ENCODE measurements at regions of chr7 and their contacts with region 1.

Region 1: GRCh38 chr7:33487998-33488682 is 358.8 kb downstream of the BBS9 start:
- DNase-seq: no peak
- ATAC-seq: peak; percentile 92
- H3K4me3 ChIP-seq: no peak overlapping the region
- H3K27ac ChIP-seq: no peak overlapping the region
- H3K4me1 ChIP-seq: peaks cover 6% of the 10 kb centered on the region; the same call in 1 of the 2 replicates
- H3K27me3 ChIP-seq: no peaks in the 10 kb centered on the region
- CTCF ChIP-seq: no peak
- EP300 ChIP-seq: peak in 1 of 2 experiments; percentile 55; a peak in 1 of 4 replicates
- POLR2A ChIP-seq: no peak
- RAD21 ChIP-seq: no peak

Region 2: DNA sequence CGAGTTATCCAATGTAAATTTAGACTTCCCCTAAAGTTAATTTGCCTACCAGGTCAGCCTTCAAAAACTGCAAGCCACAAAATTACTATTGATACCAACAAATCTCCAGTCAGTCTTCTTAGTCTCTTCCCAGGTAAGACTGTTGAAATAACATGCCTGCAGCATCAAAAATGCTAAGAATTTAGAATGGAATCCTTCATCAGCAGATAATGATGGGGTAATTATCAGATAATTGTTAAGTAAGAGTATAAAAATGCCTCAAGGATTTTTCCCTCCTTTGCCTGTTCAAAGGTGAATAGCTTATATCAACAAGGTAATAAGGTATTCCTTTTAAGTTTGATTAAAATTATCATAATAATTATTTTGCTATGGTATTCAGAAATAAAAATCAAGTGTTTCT is 130.3 kb before region 1 on chr7:
- CTCF ChIA-PET with region 1: no interaction called
- POLR2A ChIA-PET with region 1: no interaction called
- RAD21 ChIA-PET with region 1: no interaction called
- SMC1A ChIA-PET with region 1: no interaction called
- in situ Hi-C with region 1: no loop called
- intact Hi-C with region 1: no loop called
- DNase-seq: no peak
- ATAC-seq: no peak
- H3K4me3 ChIP-seq: no peak overlapping the region
- H3K27ac ChIP-seq: no peak overlapping the region
- H3K4me1 ChIP-seq: no peaks in the 10 kb centered on the region
- H3K27me3 ChIP-seq: no peaks in the 10 kb centered on the region
- CTCF ChIP-seq: no peak
- EP300 ChIP-seq: no peak
- POLR2A ChIP-seq: no peak
- RAD21 ChIP-seq: no peak

Region 3: DNA sequence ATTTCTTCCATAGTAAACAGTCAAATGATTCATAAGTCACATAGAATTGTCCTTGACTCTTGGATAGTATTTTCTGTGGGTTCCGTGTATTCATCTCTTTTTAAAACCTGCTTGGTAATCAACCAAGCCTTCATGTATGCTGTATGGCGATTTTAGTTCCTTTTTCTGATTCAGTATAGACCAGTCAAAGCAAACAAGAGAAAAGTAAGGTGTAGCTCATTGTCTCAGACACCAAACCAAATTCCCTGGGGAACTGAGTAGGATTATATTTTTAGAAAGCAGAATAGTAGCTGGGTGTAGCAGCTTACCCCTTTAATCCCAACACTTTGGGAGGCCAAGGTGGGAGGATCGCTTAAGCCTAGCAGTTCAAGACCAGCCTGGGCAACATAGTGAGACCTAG is 118.3 kb before region 1 on chr7:
- CTCF ChIA-PET with region 1: no interaction called
- POLR2A ChIA-PET with region 1: no interaction called
- RAD21 ChIA-PET with region 1: no interaction called
- SMC1A ChIA-PET with region 1: no interaction called
- in situ Hi-C with region 1: no loop called
- intact Hi-C with region 1: no loop called
- DNase-seq: no peak
- ATAC-seq: peak; percentile 58
- H3K4me3 ChIP-seq: no peak overlapping the region
- H3K27ac ChIP-seq: no peak overlapping the region
- H3K4me1 ChIP-seq: no peaks in the 10 kb centered on the region
- H3K27me3 ChIP-seq: no peaks in the 10 kb centered on the region
- CTCF ChIP-seq: no peak
- EP300 ChIP-seq: no peak
- POLR2A ChIP-seq: no peak
- RAD21 ChIP-seq: no peak

Region 4: GRCh38 chr7:33459340-33459751 is 28.8 kb before region 1 on chr7:
- CTCF ChIA-PET with region 1: interaction called, 10 read pairs
- POLR2A ChIA-PET with region 1: interaction called, 5 read pairs
- RAD21 ChIA-PET with region 1: interaction called, 15 read pairs
- SMC1A ChIA-PET with region 1: interaction called, 12 read pairs
- in situ Hi-C with region 1: no loop called
- intact Hi-C with region 1: no loop called
- DNase-seq: no peak
- ATAC-seq: peak; percentile 93
- H3K4me3 ChIP-seq: no peak overlapping the region
- H3K27ac ChIP-seq: no peak overlapping the region
- H3K4me1 ChIP-seq: no peaks in the 10 kb centered on the region
- H3K27me3 ChIP-seq: no peaks in the 10 kb centered on the region
- CTCF ChIP-seq: peak; percentile 30 to 58 (median 56); a peak in 5 of 6 replicates
- EP300 ChIP-seq: no peak
- POLR2A ChIP-seq: no peak
- RAD21 ChIP-seq: peak; percentile 69

Region 5: GRCh38 chr7:33477719-33478480 is 10.2 kb before region 1 on chr7:
- CTCF ChIA-PET with region 1: interaction called, 5 read pairs
- POLR2A ChIA-PET with region 1: no interaction called
- RAD21 ChIA-PET with region 1: interaction called, 5 read pairs
- SMC1A ChIA-PET with region 1: interaction called, 11 read pairs
- in situ Hi-C with region 1: no loop called
- intact Hi-C with region 1: no loop called
- DNase-seq: no peak
- ATAC-seq: peak; percentile 76
- H3K4me3 ChIP-seq: no peak overlapping the region
- H3K27ac ChIP-seq: no peak overlapping the region
- H3K4me1 ChIP-seq: no peaks in the 10 kb centered on the region
- H3K27me3 ChIP-seq: no peaks in the 10 kb centered on the region
- CTCF ChIP-seq: no peak
- EP300 ChIP-seq: no peak; a peak in 1 of 4 replicates
- POLR2A ChIP-seq: no peak
- RAD21 ChIP-seq: no peak